ENCODE measurements at regions of chr2 and their contacts with region 1.

Region 1: GRCh38 chr2:44479122-44479887 is 117.6 kb downstream of the CAMKMT start:
- H3K4me3 Mint-ChIP-seq: no peak overlapping the region
- H3K27ac Mint-ChIP-seq: no peak overlapping the region
- H3K4me1 Mint-ChIP-seq: no peaks in the 10 kb centered on the region
- H3K27me3 Mint-ChIP-seq: no peaks in the 10 kb centered on the region

Region 2: DNA sequence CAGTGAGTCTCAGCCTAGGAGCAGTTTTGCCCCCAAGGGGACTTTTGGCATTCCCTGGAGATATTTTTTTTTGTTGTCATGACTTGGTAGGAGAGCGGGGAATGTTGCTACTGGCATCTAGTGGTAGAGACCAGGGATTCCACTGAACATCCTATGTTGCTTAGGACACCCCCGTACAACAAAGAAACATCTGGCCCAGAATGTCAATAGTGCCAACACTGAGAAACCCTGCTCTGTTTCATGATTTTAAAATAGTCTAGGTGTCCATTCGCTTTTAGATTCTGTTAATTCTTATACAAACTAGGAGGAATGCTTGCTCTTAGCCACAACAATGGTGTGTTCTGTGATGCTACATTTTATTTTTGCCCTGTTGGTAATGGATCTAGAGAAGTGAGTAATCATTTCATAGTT is 236.4 kb after region 1 on chr2:
- intact Hi-C with region 1: loop called (anchors 5 kb)
- H3K4me3 Mint-ChIP-seq: no peak overlapping the region
- H3K27ac Mint-ChIP-seq: no peak overlapping the region
- H3K4me1 Mint-ChIP-seq: peaks cover 10% of the 10 kb centered on the region
- H3K27me3 Mint-ChIP-seq: no peaks in the 10 kb centered on the region